GM13976 (cell line): ENCODE measurements at regions of chr16 and their contacts with region 1.

Region 1: DNA sequence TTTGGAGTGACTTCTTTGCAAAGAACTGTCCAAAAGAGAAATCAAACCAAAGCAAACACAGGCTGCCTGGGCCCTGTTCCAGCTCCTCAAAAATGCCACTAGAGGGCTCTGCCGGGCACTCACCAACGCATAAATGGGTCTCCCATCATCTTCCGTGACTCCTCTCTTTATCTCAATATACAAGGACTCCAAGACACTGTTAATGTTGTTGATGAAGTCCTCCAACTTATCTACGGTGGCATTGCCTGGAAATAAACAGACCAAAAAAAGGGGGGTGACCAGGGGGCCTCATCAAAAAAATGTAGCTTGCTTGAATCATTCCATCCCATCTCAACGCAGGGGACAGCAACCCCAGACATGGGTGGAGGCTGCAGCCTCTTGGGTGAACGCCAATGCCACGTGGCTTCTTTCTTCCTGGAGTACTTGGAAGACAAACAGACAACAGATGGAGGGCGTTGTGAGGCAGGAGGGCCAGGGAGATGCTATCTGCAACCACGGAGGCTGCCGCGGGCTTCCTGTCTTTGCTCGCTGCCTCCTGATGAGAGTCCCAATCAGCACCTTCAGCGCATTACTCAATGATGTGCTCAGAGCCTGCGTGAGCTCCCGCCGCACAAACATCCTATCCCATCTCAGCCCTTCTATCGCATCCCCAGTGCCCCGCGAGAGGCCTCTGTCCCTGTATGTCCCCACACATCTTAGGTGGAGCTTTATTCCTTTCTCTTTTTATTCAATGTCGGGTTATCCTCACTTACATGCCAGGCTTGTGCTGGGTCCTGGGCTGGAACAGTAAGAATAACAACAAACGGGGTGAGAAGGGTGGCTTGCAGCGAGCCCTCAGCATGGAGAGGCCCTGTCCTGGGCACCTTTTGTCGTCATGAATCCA is 32.0 kb downstream of the KDM8 start:
- DNase-seq: peak; percentile 76
- CTCF ChIP-seq: peak; percentile 65

Region 2: GRCh38 chr16:27367461-27368357 is 132.4 kb after region 1 on chr16:
- in situ Hi-C with region 1: loop called (anchors 10 kb)
- DNase-seq: peak; percentile 87
- CTCF ChIP-seq: peak; percentile 83

Region 3: GRCh38 chr16:27598931-27599565 is 363.8 kb after region 1 on chr16:
- in situ Hi-C with region 1: no loop called
- DNase-seq: no peak
- CTCF ChIP-seq: no peak